Activated naive CD4-positive, alpha-beta T cell treated with anti-CD3 and anti-CD28 coated beads for 36 hours (primary cell): ENCODE measurements at regions of chr7 and their contacts with region 1.

Region 1: GRCh38 chr7:24907311-24907886 is 72.6 kb downstream of the OSBPL3 start:
- DNase-seq: peak; percentile 48
- H3K4me3 Mint-ChIP-seq: no peak overlapping the region
- H3K27ac Mint-ChIP-seq: no peak overlapping the region
- H3K4me1 Mint-ChIP-seq: peaks cover 34% of the 10 kb centered on the region
- H3K27me3 Mint-ChIP-seq: no peaks in the 10 kb centered on the region

Region 2: DNA sequence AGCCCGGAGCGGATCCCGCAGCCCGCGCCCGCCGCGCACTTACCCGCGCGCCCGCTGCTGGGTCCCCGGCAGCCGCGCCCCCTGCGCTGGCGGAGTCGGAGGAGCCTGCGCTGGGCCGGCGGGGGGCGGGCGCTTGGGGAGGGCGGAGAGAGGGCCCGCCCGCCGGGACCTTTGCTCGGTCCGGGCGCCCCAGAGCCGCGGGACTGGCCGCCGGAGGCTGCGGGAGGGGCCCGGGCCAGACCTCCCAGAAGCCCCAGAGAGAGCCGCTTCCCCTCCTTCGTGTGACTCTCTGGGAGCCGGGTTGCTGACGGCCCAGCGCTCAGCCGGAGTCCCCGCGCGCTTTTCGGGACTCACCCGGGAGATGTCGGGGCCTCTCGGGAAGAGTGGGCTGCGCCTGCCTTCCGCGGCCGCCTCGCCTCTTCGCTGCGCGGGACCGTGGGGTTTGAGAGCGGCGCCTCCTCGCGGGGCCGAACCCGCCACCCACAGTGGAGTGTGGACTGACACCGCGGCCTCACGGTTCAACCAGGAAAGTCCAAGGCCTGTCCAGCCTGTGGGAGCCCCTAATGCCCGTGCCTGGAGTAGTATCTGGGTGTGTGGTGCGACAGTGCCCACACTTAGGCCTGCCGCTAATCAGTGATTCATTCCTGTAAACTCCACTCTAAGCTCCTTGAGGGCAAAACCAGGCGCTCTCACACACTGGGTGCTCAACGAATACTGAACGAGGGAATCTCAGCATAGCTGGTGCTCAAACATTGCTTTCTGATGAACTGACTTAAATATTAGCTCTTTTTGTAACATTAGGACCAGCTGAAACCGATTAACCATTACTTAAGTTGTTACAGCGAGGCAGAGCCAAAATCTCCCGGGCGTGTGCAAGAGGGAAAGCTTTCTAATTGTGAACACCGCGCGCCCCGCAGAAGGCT is 149.8 kb before region 1 on chr7 and contains the start of gene GSDME:
- CTCF ChIA-PET with region 1: no interaction called
- intact Hi-C with region 1: loop called (anchors 1 kb)
- DNase-seq: no peak
- H3K4me3 Mint-ChIP-seq: peak within 1 kb of the TSS; percentile 85
- H3K27ac Mint-ChIP-seq: peak within 1 kb of the TSS; percentile 88
- H3K4me1 Mint-ChIP-seq: peaks cover 33% of the 10 kb centered on the region
- H3K27me3 Mint-ChIP-seq: peaks cover 39% of the 10 kb centered on the region
- total RNA-seq, gene GSDME: 6.8 to 6.9 TPM

Region 3: DNA sequence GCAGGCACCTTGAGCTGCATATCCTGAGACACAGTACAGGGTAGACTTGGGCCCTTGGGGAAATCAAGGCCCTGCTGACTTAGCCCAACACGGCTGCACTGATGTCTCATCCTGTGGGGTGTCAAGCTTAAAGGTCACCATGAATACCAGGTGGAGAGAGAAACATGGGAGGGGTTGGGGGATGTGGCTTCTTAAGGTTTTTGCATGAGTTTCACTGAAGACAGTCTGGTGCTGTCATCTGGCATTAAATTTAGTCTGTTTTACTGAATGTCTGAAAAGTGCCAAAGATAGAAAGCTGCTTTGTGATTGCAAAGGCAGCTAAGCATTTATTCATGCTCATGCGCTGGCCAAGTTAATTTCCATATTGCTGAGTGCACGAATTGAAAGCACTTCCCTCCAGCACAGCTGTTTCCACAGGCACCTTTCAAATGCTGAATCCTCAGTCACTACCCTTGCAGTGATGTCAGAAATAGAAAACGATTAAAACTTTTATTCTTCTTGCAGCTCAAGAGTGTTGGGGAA is 29.5 kb before region 1 on chr7:
- CTCF ChIA-PET with region 1: interaction called, 3 read pairs
- intact Hi-C with region 1: loop called (anchors 1 kb)
- DNase-seq: peak; percentile 53
- H3K4me3 Mint-ChIP-seq: no peak overlapping the region
- H3K27ac Mint-ChIP-seq: no peak overlapping the region
- H3K4me1 Mint-ChIP-seq: peaks cover 52% of the 10 kb centered on the region
- H3K27me3 Mint-ChIP-seq: no peaks in the 10 kb centered on the region

Region 4: GRCh38 chr7:24891311-24891735 is 16.1 kb before region 1 on chr7:
- CTCF ChIA-PET with region 1: no interaction called
- intact Hi-C with region 1: no loop called
- DNase-seq: no peak
- H3K4me3 Mint-ChIP-seq: no peak overlapping the region
- H3K27ac Mint-ChIP-seq: no peak overlapping the region
- H3K4me1 Mint-ChIP-seq: peaks cover 34% of the 10 kb centered on the region
- H3K27me3 Mint-ChIP-seq: no peaks in the 10 kb centered on the region

Region 5: GRCh38 chr7:24965831-24966709 is 58.7 kb after region 1 on chr7:
- CTCF ChIA-PET with region 1: no interaction called
- intact Hi-C with region 1: loop called (anchors 1 kb)
- DNase-seq: peak; percentile 68
- H3K4me3 Mint-ChIP-seq: peak overlapping the region; percentile 17
- H3K27ac Mint-ChIP-seq: peak overlapping the region; percentile 77
- H3K4me1 Mint-ChIP-seq: peaks cover 77% of the 10 kb centered on the region
- H3K27me3 Mint-ChIP-seq: no peaks in the 10 kb centered on the region

Region 6: DNA sequence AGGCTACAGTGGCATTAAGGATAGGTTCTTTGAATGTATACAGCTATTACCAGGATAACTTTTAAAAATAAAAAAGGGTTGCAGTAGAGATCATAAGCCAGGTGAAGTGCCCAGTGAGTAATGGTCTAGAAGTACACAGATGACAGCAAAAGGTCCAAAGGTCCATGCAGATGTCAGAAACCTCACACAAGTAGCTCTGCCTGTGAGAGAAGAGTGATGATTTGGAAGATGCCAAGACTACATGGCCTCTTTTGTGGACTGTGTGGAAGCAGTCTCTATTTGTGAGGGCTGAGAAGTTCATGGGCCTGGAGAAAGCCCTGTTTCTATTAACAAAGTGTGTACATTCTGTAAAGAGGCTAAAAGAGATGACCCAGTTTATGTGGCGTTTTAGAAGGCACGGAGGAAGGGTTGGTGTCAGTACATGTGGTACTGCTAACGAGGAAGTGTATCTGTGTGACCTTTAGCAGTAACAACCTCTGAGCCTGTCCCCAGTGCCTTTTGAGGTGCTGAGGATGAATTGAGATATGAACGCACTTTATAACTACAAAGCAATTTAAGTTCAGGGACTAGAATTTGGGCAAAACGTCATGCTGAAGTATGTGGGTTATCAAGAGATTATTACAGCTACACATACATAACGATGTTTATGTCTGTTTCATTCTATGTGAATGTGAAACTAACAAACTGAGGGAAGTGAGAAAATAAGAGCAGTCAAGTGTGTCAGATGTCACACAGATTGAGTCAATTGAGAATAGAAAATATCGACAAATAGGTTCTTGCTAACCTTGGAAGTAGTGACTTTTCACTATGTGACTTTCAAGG is 210.0 kb after region 1 on chr7:
- CTCF ChIA-PET with region 1: no interaction called
- intact Hi-C with region 1: loop called (anchors 1 kb)
- DNase-seq: no peak
- H3K4me3 Mint-ChIP-seq: no peak overlapping the region
- H3K27ac Mint-ChIP-seq: peak overlapping the region; percentile 5
- H3K4me1 Mint-ChIP-seq: peaks cover 50% of the 10 kb centered on the region
- H3K27me3 Mint-ChIP-seq: no peaks in the 10 kb centered on the region

Region 7: GRCh38 chr7:25179771-25180591 is 272.6 kb after region 1 on chr7:
- CTCF ChIA-PET with region 1: no interaction called
- intact Hi-C with region 1: no loop called
- DNase-seq: peak; percentile 94
- H3K4me3 Mint-ChIP-seq: peak overlapping the region; percentile 83
- H3K27ac Mint-ChIP-seq: peak overlapping the region; percentile 81
- H3K4me1 Mint-ChIP-seq: peaks cover 19% of the 10 kb centered on the region
- H3K27me3 Mint-ChIP-seq: no peaks in the 10 kb centered on the region